ENCODE measurements at regions of chr2 and their contacts with region 1.

Region 1: GRCh38 chr2:171416009-171416926 is 17.5 kb downstream of the METTL8 start:
- DNase-seq: peak; percentile 92
- ATAC-seq: peak; percentile 96
- H3K4me3 Mint-ChIP-seq: no peak overlapping the region
- H3K27ac Mint-ChIP-seq: peak overlapping the region; percentile 82
- H3K4me1 Mint-ChIP-seq: peaks cover 29% of the 10 kb centered on the region
- H3K27me3 Mint-ChIP-seq: no peaks in the 10 kb centered on the region
- CTCF ChIP-seq: peak; percentile 66

Region 2: DNA sequence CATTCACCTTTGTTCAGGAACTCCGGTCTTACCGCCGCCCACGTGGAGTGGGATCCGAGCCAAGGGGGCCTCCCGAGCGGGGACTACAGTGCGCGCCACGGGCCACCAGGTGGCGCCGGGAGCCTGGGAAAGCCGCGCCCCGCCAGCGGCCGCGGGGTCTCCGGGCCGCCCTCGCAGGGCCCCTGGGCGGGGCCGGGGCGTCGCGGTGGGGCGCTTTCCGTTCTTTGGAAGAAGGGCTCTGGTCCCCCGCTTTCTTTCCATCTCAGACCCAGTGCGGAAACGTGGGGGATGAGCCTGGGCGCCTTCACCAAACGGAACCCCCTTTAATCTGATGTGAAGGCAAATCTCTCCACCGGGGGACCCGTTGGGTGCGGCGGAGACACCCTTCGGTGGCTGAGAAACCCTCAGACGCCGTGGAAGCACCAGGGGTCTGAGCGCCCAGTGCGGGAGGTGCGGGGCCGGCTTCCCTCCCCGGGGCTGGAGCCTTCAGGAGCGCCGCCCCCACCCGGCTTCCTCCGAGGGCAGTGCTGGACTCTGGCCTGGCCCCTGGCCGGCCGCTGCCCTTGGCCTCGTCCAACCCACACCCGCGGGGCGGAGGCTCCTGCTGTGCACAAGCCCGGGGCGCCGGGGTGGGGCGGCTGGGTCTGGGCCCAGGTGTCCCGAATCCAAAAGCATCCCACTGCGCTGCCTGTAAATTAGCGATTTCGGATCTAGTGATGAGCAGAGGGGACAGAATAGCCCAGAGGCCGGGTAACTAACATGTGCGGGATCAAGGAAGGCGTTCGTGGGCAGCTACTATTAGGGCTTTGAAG is 442.6 kb before region 1 on chr2:
- CTCF ChIA-PET with region 1: interaction called, 25 read pairs
- POLR2A ChIA-PET with region 1: no interaction called
- intact Hi-C with region 1: loop called (anchors 5 kb)
- DNase-seq: peak; percentile 90
- ATAC-seq: peak; percentile 96
- H3K4me3 Mint-ChIP-seq: peak overlapping the region; percentile 73
- H3K27ac Mint-ChIP-seq: peak overlapping the region; percentile 58
- H3K4me1 Mint-ChIP-seq: peaks cover 6% of the 10 kb centered on the region
- H3K27me3 Mint-ChIP-seq: no peaks in the 10 kb centered on the region
- CTCF ChIP-seq: peak; percentile 99

Region 3: DNA sequence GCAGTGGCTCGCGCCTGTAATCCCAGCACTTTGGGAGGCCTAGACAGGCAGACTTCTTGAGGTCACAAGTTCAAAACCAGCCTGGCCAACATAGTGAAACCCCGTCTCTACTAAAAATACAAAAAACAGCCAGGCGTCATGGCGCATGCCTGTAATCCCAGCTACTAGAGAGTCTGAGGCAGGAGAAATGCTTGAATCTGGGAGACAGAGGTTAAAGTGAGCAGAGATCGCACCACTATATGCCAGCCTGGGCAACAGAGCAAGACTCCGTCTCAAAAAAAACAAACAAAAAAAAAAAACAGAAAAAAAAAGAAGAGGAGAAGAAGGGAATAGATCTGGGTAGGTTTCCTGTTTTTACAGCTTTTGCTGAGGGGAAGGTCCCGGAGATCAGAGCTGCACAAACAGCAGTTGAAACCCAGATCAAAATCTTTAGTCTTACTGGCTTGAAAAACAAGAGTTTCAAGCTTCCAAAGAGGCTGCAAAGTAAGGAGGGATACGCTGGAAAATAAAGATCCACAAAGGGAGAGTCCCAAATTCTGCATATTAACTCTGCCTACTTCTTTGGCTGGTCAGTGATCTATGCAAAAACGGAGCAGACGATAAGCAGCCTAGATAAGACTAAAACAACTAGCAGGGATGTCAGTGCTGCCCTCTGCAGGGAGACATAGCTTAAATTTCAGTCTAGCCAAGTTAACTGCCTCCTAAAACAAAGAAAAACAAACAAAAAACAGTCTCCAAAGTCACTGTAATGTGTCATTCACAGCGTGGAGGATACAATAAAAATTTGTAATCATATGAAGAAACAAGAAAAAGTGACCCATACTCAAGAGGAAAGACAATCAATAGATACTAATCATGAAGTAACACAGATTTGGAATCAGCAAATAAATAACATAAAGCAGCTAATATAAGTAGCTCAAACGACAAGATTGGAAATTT is 329.6 kb before region 1 on chr2:
- CTCF ChIA-PET with region 1: interaction called, 10 read pairs
- POLR2A ChIA-PET with region 1: no interaction called
- intact Hi-C with region 1: no loop called
- DNase-seq: peak; percentile 73
- ATAC-seq: peak; percentile 73
- H3K4me3 Mint-ChIP-seq: peak overlapping the region; percentile 61
- H3K27ac Mint-ChIP-seq: peak overlapping the region; percentile 79
- H3K4me1 Mint-ChIP-seq: peaks cover 64% of the 10 kb centered on the region
- H3K27me3 Mint-ChIP-seq: no peaks in the 10 kb centered on the region
- CTCF ChIP-seq: peak; percentile 68

Region 4: DNA sequence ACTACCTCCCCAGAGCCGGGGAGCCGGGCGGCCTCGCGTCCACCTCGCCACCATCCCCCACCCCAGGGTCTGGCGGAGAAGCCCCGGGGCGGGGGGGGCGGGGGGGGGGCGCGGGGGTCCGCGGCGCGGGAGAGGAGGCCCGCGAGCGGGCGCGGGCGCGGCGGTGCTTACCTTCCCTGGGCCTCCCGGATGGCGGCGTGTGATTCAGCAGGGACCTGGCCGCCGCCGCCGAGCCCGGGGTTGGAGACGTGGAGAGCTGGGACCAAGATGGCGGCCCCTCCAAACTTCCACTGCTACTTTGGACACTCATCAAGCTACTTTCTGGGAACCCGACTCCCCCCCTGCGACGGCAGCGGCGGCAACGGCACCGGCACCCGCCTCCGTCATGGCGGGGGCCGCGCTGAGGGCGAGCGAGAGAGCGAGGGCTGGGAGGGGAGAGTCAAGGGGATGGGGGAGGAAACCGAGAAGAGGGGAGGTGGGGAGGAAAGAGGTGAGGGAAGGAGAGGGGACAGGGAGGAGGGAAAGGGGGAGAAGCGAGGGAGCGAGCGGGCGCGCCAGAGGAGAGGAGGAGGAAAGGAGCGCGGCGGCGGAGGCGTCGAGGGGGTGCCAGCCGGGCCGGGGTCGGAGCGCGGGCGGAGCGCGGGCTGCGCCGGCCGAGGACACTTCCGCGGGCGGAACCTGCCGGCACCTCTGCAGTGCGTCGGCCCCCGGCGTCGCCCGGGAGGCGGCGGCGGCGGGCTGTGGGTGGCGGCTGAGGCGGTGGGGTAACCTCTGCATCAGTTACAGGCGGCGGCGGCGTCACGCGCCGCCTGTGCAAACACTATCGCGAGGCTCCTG is 255.9 kb before region 1 on chr2 and contains the start of gene TLK1:
- CTCF ChIA-PET with region 1: interaction called, 4 read pairs
- POLR2A ChIA-PET with region 1: interaction called, 3 read pairs
- intact Hi-C with region 1: loop called (anchors 5 kb)
- DNase-seq: peak; percentile 82
- ATAC-seq: peak; percentile 69
- H3K4me3 Mint-ChIP-seq: peak within 1 kb of the TSS; percentile 91
- H3K27ac Mint-ChIP-seq: peak within 1 kb of the TSS; percentile 96
- H3K4me1 Mint-ChIP-seq: peaks cover 48% of the 10 kb centered on the region
- H3K27me3 Mint-ChIP-seq: no peaks in the 10 kb centered on the region
- CTCF ChIP-seq: no peak
- total RNA-seq, gene TLK1: 53.9 to 56.0 TPM

Region 5: DNA sequence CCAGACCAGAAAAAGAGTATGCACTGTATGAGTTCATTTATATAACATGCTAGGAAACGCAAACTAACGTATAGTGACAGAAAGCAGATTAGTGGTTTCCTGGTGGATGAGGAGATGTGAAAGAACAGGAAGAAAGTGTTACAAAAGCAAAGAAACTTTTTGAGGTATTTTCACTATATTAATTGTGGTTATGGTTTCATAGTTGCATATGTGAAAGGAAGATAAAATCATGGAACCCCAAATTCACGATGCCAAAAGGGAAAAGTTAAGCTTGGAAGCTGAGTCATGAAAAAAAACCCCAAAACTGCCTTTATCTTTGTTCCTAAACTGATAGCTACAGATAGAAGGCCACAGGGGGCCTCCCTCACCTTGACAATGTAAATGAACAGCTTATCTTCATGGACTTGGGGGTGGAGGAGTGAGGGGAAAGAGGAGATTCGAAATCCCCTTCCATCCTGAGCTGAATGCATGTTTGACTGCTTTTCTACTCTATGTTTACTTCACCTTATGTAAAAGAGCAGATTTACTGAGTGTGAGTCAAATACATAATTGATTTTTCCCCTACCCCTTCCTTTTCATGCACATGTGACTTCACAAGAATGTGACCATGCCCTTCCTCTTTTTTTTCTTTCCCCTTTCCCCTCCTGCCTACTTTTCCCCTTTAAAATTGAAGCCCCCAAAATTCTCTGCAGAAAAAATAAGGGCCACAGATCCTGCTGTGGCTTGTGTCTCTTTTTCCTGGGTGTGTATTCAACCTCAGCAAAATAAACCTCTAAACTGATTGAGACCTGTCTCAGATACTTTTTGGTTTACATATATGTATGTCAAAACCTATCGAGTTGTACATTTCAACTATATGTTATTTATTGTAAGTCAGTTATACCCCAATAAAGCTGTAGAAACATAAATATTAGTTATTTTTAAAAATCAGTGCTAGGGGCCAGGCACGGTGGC is 155.5 kb before region 1 on chr2:
- CTCF ChIA-PET with region 1: interaction called, 5 read pairs
- POLR2A ChIA-PET with region 1: no interaction called
- intact Hi-C with region 1: loop called (anchors 5 kb)
- DNase-seq: peak; percentile 45
- ATAC-seq: peak; percentile 86
- H3K4me3 Mint-ChIP-seq: no peak overlapping the region
- H3K27ac Mint-ChIP-seq: peak overlapping the region; percentile 50
- H3K4me1 Mint-ChIP-seq: peaks cover 25% of the 10 kb centered on the region
- H3K27me3 Mint-ChIP-seq: no peaks in the 10 kb centered on the region
- CTCF ChIP-seq: no peak

Region 6: DNA sequence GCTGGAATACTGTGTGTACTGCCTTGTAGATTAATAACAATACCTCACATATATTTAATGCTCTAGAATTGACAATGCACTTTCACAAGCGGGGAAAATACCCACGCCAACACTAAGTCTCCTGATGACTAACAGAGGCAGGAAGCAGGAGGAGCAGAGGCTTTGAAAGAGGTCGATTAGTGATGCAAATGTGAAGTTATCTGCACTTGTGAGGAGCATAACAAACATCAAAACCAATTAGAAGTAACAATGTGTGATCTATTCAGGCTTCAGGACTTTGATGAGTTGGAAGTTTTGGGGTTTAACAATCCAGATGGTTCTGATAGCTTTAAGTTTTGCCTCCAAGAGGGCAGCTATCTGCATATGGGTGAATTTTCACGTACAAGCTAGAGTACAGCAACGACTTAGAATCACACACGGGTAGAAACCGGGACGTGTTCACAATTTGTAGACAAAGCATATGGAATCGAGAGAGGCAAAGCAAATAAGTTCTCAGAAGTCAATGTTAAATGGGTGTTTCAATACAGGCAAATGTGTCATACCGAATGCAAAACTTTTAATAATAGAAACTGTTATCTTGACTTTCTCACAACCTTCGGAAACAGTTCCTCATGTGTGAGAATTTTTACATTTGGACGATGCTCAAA is 97.0 kb before region 1 on chr2:
- CTCF ChIA-PET with region 1: interaction called, 10 read pairs
- POLR2A ChIA-PET with region 1: interaction called, 3 read pairs
- intact Hi-C with region 1: loop called (anchors 10 kb)
- DNase-seq: peak; percentile 78
- ATAC-seq: peak; percentile 88
- H3K4me3 Mint-ChIP-seq: peak overlapping the region; percentile 53
- H3K27ac Mint-ChIP-seq: peak overlapping the region; percentile 96
- H3K4me1 Mint-ChIP-seq: peaks cover 43% of the 10 kb centered on the region
- H3K27me3 Mint-ChIP-seq: no peaks in the 10 kb centered on the region
- CTCF ChIP-seq: no peak

Region 7: DNA sequence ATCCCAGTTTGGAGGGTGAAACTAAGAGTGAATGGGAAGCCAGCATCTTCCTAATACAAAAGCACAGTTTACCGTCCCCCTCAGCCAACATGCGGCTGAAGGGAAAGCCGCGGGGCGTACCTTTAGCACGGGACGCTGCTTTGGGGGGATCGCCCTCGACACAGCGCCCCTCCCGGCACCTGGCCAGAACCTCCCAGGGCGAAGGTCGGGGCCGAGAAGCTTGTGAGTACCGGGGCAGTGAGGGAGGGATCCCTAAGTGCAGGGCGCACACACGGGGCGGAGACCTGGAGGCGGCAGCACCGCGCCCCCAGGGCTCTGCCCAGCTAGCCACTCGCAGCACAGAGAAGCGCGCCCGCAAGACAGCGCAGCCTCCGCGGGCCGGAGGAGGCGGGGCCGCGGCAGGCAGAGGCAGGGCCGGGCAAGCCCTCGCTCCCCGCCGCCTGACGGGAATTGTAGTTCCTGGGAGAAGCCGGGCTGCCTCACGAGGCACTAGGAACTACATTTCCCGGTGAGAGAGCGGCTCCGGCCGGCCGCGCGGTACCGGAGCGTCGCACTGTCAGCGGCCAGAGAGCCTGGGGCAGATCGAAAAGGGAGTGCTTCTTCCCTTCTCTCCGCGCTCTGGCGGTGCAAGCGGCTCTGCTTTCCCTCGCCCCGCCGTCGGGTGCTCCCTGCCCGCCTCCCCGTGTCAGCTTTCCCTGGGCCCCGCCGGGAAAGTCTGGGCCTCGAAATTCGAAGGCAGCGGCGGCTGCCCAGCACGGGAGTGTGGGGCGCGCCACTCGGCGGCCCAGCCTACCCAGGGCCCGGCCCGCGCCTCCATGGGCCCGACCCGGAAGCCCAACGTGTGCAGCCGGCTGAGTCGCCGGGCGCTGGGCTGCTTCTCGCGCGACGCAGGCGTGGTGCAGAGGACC is 17.7 kb after region 1 on chr2 and contains the starts of genes DCAF17 and METTL8:
- CTCF ChIA-PET with region 1: interaction called, 13 read pairs
- POLR2A ChIA-PET with region 1: interaction called, 8 read pairs
- intact Hi-C with region 1: no loop called
- DNase-seq: peak; percentile 95
- ATAC-seq: peak; percentile 93
- H3K4me3 Mint-ChIP-seq: peak within 1 kb of the TSS; percentile 91
- H3K27ac Mint-ChIP-seq: peak within 1 kb of the TSS; percentile 95
- H3K4me1 Mint-ChIP-seq: peaks cover 46% of the 10 kb centered on the region
- H3K27me3 Mint-ChIP-seq: no peaks in the 10 kb centered on the region
- CTCF ChIP-seq: peak; percentile 48
- total RNA-seq, gene DCAF17: 19.0 to 20.1 TPM
- total RNA-seq, gene METTL8: 43.4 to 44.8 TPM

Region 8: GRCh38 chr2:171541202-171541887 is 125.1 kb after region 1 on chr2:
- CTCF ChIA-PET with region 1: no interaction called
- POLR2A ChIA-PET with region 1: no interaction called
- intact Hi-C with region 1: no loop called
- DNase-seq: peak; percentile 23
- ATAC-seq: no peak
- H3K4me3 Mint-ChIP-seq: no peak overlapping the region
- H3K27ac Mint-ChIP-seq: no peak overlapping the region
- H3K4me1 Mint-ChIP-seq: no peaks in the 10 kb centered on the region
- H3K27me3 Mint-ChIP-seq: peaks cover 3% of the 10 kb centered on the region
- CTCF ChIP-seq: no peak

Region 9: GRCh38 chr2:171553858-171554257 is 137.6 kb after region 1 on chr2:
- CTCF ChIA-PET with region 1: no interaction called
- POLR2A ChIA-PET with region 1: no interaction called
- intact Hi-C with region 1: no loop called
- DNase-seq: no peak
- ATAC-seq: no peak
- H3K4me3 Mint-ChIP-seq: no peak overlapping the region
- H3K27ac Mint-ChIP-seq: no peak overlapping the region
- H3K4me1 Mint-ChIP-seq: peaks cover 4% of the 10 kb centered on the region
- H3K27me3 Mint-ChIP-seq: peaks cover 3% of the 10 kb centered on the region
- CTCF ChIP-seq: no peak

Region 10: DNA sequence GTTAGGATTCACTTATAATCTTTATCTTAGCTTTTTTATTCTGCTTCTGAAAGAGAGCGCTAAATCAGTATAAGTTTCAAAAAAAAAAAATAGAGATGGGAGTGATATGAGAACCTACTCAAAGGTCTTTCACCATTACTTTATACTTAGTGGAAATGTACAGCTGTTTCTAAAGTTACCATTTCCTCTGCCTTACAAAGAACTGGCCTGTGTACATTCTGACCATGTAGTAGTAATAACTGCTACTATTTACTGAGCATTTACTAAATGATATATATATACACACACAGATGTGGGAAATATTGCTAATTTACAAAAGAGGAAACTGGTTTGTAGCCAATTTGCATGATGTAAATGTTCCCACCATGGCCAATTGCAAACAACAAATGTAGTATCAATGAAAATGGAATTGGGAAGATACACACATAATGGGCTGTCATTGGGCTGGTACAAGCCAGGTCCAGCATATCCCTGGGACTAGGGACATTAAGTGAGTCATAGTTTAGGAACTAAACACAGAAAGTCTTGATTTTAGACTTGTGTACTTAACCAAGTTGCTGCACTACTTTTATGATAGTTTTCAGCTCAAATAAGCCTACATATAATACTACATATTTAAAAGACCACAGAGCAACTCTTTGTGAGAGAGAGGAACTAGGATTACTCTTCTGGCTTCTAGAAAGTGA is 338.1 kb after region 1 on chr2:
- CTCF ChIA-PET with region 1: no interaction called
- POLR2A ChIA-PET with region 1: no interaction called
- intact Hi-C with region 1: no loop called
- DNase-seq: no peak
- ATAC-seq: no peak
- H3K4me3 Mint-ChIP-seq: no peak overlapping the region
- H3K27ac Mint-ChIP-seq: no peak overlapping the region
- H3K4me1 Mint-ChIP-seq: no peaks in the 10 kb centered on the region
- H3K27me3 Mint-ChIP-seq: no peaks in the 10 kb centered on the region
- CTCF ChIP-seq: no peak

Measured in activated CD8-positive, alpha-beta T cell treated with anti-CD3 and anti-CD28 coated beads for 36 hours (primary cell).